ENCODE measurements at regions of chr14 and their contacts with region 1.

Region 1: GRCh38 chr14:63276492-63277342 is 42.0 kb downstream of the GPHB5 start:
- DNase-seq: no peak
- H3K4me3 ChIP-seq: no peak overlapping the region
- H3K27ac ChIP-seq: no peak overlapping the region
- H3K4me1 ChIP-seq: no peaks in the 10 kb centered on the region
- H3K27me3 ChIP-seq: no peaks in the 10 kb centered on the region
- CTCF ChIP-seq: peak; percentile 54

Region 2: GRCh38 chr14:62162998-62163589 is 1113.6 kb before region 1 on chr14:
- intact Hi-C with region 1: loop called (anchors 5 kb)
- DNase-seq: no peak
- H3K4me3 ChIP-seq: no peak overlapping the region
- H3K27ac ChIP-seq: no peak overlapping the region
- H3K4me1 ChIP-seq: no peaks in the 10 kb centered on the region
- H3K27me3 ChIP-seq: no peaks in the 10 kb centered on the region
- CTCF ChIP-seq: peak; percentile 40

Region 3: GRCh38 chr14:62179367-62180018 is 1097.2 kb before region 1 on chr14:
- intact Hi-C with region 1: loop called (anchors 5 kb)
- DNase-seq: peak; percentile 28
- H3K4me3 ChIP-seq: no peak overlapping the region
- H3K27ac ChIP-seq: no peak overlapping the region
- H3K4me1 ChIP-seq: no peaks in the 10 kb centered on the region
- H3K27me3 ChIP-seq: no peaks in the 10 kb centered on the region
- CTCF ChIP-seq: no peak

Region 4: DNA sequence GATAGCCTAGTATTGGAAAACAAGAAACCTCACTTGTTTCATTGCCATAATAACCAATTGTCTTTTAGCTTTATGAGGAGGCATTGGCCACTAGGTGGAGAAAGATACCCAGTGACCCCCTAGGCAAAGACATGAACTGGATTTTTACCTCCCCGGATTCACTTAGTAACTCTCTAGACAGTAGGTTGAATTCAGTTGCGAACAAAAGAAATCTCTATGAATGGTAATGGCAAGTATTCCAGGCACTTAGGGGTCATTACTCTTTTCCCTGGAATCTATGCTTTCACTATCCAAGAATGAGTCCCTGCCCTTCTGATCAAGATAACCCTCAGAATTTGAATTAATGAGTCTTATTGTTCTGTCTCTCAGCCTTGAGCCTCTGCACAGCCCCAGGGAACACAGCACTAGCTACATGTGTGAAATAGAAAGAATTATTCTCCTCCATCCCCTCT is 101.9 kb before region 1 on chr14:
- intact Hi-C with region 1: loop called (anchors 2 kb)
- DNase-seq: no peak
- H3K4me3 ChIP-seq: no peak overlapping the region
- H3K27ac ChIP-seq: no peak overlapping the region
- H3K4me1 ChIP-seq: no peaks in the 10 kb centered on the region
- H3K27me3 ChIP-seq: no peaks in the 10 kb centered on the region
- CTCF ChIP-seq: no peak

Measured in colonic mucosa (tissue), 4 donors.